CD8-positive, alpha-beta T cell (primary cell): ENCODE measurements at regions of chr17 and their contacts with region 1.

Region 1: GRCh38 chr17:8383143-8383822 is at the start of gene RPL26:
- DNase-seq: peak; percentile 88 to 98 (median 95)
- ATAC-seq: peak; percentile 89
- H3K4me3 ChIP-seq: peak within 1 kb of the TSS; percentile 70 to 72
- H3K4me3 Mint-ChIP-seq: peak within 1 kb of the TSS; percentile 96
- H3K27ac ChIP-seq: peak within 1 kb of the TSS; percentile 71 to 76
- H3K27ac Mint-ChIP-seq: peak within 1 kb of the TSS; percentile 93
- H3K4me1 ChIP-seq: peaks cover 40% of the 10 kb centered on the region
- H3K4me1 Mint-ChIP-seq: peaks cover 69% of the 10 kb centered on the region
- H3K27me3 ChIP-seq: no peaks in the 10 kb centered on the region
- H3K27me3 Mint-ChIP-seq: no peaks in the 10 kb centered on the region
- CTCF ChIP-seq: peak; percentile 100
- total RNA-seq, gene RPL26: 2,888 to 2,889 TPM

Region 2: DNA sequence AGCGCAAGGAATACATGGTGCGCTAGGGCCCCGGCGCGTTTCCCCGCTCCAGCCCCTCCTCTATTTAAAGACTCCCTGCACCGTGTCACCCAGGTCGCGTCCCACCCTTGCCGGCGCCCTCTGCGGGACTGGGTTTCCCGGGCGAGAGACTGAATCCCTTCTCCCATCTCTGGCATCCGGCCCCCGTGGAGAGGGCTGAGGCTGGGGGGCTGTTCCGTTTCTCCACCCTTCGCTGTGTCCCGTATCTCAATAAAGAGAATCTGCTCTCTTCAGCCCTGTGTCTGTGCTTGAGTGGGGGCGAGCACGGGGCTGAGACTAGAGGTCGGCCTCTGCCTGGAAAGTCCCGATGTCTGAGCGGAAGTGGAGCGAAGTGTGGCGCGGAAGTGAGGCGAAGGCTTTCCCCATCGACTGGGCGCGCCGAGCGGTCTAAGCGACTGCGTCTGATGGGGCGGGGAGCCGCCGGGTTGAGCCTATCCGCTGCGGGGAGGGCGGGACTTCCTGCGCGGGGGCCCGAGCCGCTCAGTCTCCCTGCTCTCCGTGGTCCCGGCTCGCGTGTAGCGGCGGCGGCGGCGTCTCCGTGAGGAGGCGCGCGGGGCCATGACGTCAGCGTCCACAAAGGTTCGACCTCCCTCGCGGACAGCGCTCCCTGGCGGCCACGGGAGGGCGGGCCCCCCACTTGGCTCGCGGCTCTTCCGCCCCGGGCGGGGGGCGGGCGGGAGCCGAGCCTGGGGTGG is 1368.9 kb before region 1 on chr17:
- CTCF ChIA-PET with region 1: no interaction called
- POLR2A ChIA-PET with region 1: no interaction called
- intact Hi-C with region 1: loop called in 1 of 2 experiments (anchors 10 kb)
- DNase-seq: peak; percentile 94 to 100 (median 97)
- ATAC-seq: peak; percentile 79
- H3K4me3 ChIP-seq: peak overlapping the region; percentile 69 to 70
- H3K4me3 Mint-ChIP-seq: peak overlapping the region; percentile 98
- H3K27ac ChIP-seq: peak overlapping the region; percentile 95 to 99
- H3K27ac Mint-ChIP-seq: peak overlapping the region; percentile 100
- H3K4me1 ChIP-seq: peaks cover 63% of the 10 kb centered on the region
- H3K4me1 Mint-ChIP-seq: peaks cover 78% of the 10 kb centered on the region
- H3K27me3 ChIP-seq: no peaks in the 10 kb centered on the region
- H3K27me3 Mint-ChIP-seq: no peaks in the 10 kb centered on the region
- CTCF ChIP-seq: peak; percentile 61

Region 3: GRCh38 chr17:8294814-8295316 is 88.4 kb before region 1 on chr17:
- CTCF ChIA-PET with region 1: no interaction called
- POLR2A ChIA-PET with region 1: no interaction called
- intact Hi-C with region 1: loop called in 1 of 2 experiments (anchors 2 kb)
- DNase-seq: no peak
- ATAC-seq: no peak
- H3K4me3 ChIP-seq: peak overlapping the region; percentile 80 to 98
- H3K4me3 Mint-ChIP-seq: peak overlapping the region; percentile 86
- H3K27ac ChIP-seq: peak overlapping the region; percentile 80 to 87
- H3K27ac Mint-ChIP-seq: peak overlapping the region; percentile 90
- H3K4me1 ChIP-seq: peaks cover 12% of the 10 kb centered on the region
- H3K4me1 Mint-ChIP-seq: peaks cover 30% of the 10 kb centered on the region
- H3K27me3 ChIP-seq: no peaks in the 10 kb centered on the region
- H3K27me3 Mint-ChIP-seq: no peaks in the 10 kb centered on the region
- CTCF ChIP-seq: no peak

Region 4: GRCh38 chr17:8320990-8321389 is 62.3 kb before region 1 on chr17:
- CTCF ChIA-PET with region 1: no interaction called
- POLR2A ChIA-PET with region 1: no interaction called
- intact Hi-C with region 1: no loop called
- DNase-seq: no peak
- ATAC-seq: no peak
- H3K4me3 ChIP-seq: no peak overlapping the region
- H3K4me3 Mint-ChIP-seq: no peak overlapping the region
- H3K27ac ChIP-seq: no peak overlapping the region
- H3K27ac Mint-ChIP-seq: no peak overlapping the region
- H3K4me1 ChIP-seq: peaks cover under 1% of the 10 kb centered on the region
- H3K4me1 Mint-ChIP-seq: peaks cover 5% of the 10 kb centered on the region
- H3K27me3 ChIP-seq: peaks cover 10 to 12% of the 10 kb centered on the region in 2 experiments
- H3K27me3 Mint-ChIP-seq: peaks cover 18% of the 10 kb centered on the region
- CTCF ChIP-seq: no peak

Region 5: DNA sequence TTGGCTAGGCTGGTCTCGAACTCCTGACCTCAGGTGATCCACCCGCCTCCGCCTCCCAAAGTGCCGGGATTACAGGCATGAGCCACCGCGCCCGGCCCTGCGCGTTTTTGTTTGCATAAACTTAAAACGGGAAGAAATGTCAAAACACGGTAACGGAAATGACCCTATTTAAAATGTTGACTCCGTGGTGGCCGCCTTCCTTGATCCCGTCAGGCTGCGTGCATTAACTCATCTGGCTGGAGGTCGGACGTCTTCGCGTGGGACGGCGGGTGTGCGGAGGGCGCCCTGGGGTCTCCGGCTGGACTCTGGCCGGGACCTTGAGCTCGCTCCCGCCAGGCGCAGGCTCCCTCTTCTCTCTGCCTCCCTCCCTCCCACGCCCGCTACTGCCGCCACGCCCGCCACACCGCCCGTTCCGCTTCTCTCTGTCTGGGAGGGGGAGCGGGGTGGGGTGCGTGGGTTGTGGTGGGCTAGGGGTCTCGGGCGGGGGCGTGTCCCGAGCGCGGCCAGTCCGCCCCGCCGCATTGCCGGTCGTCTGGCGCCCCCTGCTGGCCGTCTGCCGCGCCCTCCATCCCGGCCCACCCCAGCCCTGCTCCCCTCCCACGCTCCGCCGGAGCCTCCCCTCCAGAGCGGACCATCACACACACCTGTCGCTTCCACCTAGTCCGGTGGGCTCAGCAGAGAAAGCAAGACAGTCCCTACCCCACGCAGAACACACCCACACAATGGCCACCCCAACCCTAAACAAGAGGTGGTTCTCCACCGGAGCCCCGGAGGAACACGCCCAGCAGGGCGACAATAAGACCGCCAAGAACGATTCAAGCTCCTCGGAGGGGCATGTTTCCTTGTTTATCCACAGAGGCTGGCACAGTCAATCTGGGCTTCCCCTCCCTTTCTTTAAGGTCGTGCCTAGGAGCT is 362.6 kb after region 1 on chr17:
- CTCF ChIA-PET with region 1: interaction called, 10 read pairs
- POLR2A ChIA-PET with region 1: interaction called, 3 read pairs
- intact Hi-C with region 1: loop called (anchors 1 kb)
- DNase-seq: peak; percentile 56 to 91 (median 82)
- ATAC-seq: peak; percentile 72
- H3K4me3 ChIP-seq: peak overlapping the region; percentile 74 to 77
- H3K4me3 Mint-ChIP-seq: peak overlapping the region; percentile 94
- H3K27ac ChIP-seq: peak overlapping the region; percentile 69 to 82
- H3K27ac Mint-ChIP-seq: peak overlapping the region; percentile 94
- H3K4me1 ChIP-seq: peaks cover 15% of the 10 kb centered on the region
- H3K4me1 Mint-ChIP-seq: peaks cover 25% of the 10 kb centered on the region
- H3K27me3 ChIP-seq: no peaks in the 10 kb centered on the region
- H3K27me3 Mint-ChIP-seq: no peaks in the 10 kb centered on the region
- CTCF ChIP-seq: peak; percentile 94

Region 6: DNA sequence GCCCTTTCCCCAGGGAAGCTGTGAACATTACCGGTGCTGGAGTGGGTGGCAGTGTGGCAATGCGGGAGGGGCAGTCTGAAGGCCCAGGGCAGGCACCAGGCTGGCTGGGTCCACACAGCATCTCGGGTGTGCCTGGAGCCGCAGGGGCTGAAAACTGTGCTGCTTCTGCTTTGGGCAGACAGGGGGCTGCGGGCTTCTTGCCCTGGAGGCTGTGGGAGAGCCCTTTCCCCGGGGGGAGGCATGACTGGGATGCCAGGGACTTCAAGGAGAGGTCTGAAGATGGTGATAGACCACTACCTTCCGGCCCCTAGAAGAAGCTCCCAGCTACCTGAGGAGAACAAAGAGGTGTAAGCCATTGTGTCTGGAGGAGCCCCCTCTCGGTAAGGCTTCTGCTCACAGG is 490.9 kb after region 1 on chr17:
- CTCF ChIA-PET with region 1: no interaction called
- POLR2A ChIA-PET with region 1: no interaction called
- intact Hi-C with region 1: no loop called
- DNase-seq: no peak
- ATAC-seq: no peak
- H3K4me3 ChIP-seq: no peak overlapping the region
- H3K4me3 Mint-ChIP-seq: no peak overlapping the region
- H3K27ac ChIP-seq: no peak overlapping the region
- H3K27ac Mint-ChIP-seq: no peak overlapping the region
- H3K4me1 ChIP-seq: no peaks in the 10 kb centered on the region
- H3K4me1 Mint-ChIP-seq: peaks cover 9% of the 10 kb centered on the region
- H3K27me3 ChIP-seq: no peaks in the 10 kb centered on the region
- H3K27me3 Mint-ChIP-seq: no peaks in the 10 kb centered on the region
- CTCF ChIP-seq: no peak

Region 7: GRCh38 chr17:8954339-8954738 is 571.1 kb after region 1 on chr17:
- CTCF ChIA-PET with region 1: no interaction called
- POLR2A ChIA-PET with region 1: no interaction called
- intact Hi-C with region 1: loop called in 1 of 2 experiments (anchors 1 kb)
- DNase-seq: peak; percentile 67 to 96 (median 83)
- ATAC-seq: peak; percentile 92
- H3K4me3 ChIP-seq: peak overlapping the region in 1 of 2 experiments; percentile 4
- H3K4me3 Mint-ChIP-seq: peak overlapping the region; percentile 83
- H3K27ac ChIP-seq: peak overlapping the region; percentile 40 to 85
- H3K27ac Mint-ChIP-seq: peak overlapping the region; percentile 99
- H3K4me1 ChIP-seq: peaks cover 89% of the 10 kb centered on the region
- H3K4me1 Mint-ChIP-seq: peaks cover 97% of the 10 kb centered on the region
- H3K27me3 ChIP-seq: no peaks in the 10 kb centered on the region
- H3K27me3 Mint-ChIP-seq: no peaks in the 10 kb centered on the region
- CTCF ChIP-seq: no peak